ENCODE measurements at regions of chr3 and their contacts with region 1.

Region 1: GRCh38 chr3:59857589-59858346 is 807.9 kb upstream of the CFAP20DC start:
- DNase-seq: peak; percentile 64 to 85
- H3K4me3 ChIP-seq: no peak overlapping the region
- H3K27ac ChIP-seq: no peak overlapping the region
- H3K4me1 ChIP-seq: no peaks in the 10 kb centered on the region
- H3K27me3 ChIP-seq: no peaks in the 10 kb centered on the region
- CTCF ChIP-seq: peak; percentile 93 to 95

Region 2: DNA sequence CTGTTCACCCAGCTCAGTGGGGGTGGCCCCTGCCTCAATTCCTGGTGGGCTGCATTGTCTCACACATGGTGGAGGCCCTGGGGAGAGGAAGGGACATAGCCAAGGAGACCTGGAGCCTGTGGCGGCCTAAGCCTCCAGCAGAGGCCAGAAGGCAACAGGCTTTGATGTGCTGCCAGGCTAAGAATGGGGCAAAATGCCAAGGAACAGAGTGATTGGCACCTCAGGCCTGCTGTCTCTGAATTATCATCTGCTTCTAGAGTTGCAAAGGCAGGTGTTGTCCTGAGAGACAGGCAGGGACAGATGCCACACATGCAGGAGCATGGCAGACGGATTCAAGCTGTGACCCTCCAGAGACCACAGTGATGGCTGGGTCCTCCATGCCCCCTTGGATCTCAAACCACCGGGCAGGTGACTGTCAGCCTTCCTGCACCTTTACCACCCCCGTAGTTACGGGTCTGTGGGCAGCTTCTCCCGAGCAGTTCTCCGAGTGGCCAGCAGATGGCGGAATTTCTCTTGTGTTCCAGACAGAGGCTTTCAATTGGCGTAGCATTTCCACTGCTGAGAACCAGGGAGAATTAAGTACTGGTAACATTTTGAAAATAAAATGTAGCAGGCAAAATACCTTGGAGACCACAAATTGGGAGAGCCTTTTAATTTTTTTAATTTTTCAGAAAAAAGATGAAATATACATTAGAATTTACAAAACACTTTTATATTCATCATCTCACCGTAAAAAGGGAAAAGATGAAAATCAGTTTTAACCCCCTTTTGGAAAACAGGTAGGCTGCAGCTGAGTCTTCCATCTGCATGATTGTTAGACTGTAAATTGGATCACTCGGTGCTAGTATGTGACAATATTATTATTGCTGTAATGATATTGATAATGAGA is 282.4 kb before region 1 on chr3:
- intact Hi-C with region 1: loop called (anchors 5 kb)
- DNase-seq: peak; percentile 87
- H3K4me3 ChIP-seq: no peak overlapping the region
- H3K27ac ChIP-seq: no peak overlapping the region
- H3K4me1 ChIP-seq: peaks cover 0 to 10% (median 0%) of the 10 kb centered on the region in 4 donors
- H3K27me3 ChIP-seq: peaks cover 0 to 4% of the 10 kb centered on the region in 2 donors
- CTCF ChIP-seq: peak; percentile 90 to 95